ENCODE measurements at regions of chr18 and their contacts with region 1.

Region 1: DNA sequence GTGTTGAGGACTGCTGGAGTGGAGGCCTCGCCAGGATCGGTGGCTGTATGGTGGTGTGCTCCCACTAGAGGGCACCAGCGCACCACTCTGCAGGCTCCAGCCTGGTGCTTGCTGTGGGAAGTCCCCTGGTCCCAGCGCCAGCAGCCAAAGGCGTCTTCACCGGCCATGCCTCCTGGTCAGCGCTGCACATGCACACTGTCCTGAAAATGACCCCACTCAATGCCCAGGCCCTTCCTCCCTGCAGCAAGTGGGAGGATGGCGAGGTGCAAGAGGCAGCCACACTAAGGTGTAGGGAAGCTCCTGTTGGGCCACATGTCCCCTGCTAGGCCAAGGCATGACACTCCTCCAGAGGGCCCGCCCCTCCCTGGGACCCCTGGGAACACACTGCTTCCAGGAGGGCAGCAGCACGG is 136.5 kb downstream of the CTIF start:
- DNase-seq: peak; percentile 72
- H3K4me3 Mint-ChIP-seq: no peak overlapping the region
- H3K27ac Mint-ChIP-seq: no peak overlapping the region
- H3K4me1 Mint-ChIP-seq: peaks cover 2% of the 10 kb centered on the region
- H3K27me3 Mint-ChIP-seq: no peaks in the 10 kb centered on the region

Region 2: DNA sequence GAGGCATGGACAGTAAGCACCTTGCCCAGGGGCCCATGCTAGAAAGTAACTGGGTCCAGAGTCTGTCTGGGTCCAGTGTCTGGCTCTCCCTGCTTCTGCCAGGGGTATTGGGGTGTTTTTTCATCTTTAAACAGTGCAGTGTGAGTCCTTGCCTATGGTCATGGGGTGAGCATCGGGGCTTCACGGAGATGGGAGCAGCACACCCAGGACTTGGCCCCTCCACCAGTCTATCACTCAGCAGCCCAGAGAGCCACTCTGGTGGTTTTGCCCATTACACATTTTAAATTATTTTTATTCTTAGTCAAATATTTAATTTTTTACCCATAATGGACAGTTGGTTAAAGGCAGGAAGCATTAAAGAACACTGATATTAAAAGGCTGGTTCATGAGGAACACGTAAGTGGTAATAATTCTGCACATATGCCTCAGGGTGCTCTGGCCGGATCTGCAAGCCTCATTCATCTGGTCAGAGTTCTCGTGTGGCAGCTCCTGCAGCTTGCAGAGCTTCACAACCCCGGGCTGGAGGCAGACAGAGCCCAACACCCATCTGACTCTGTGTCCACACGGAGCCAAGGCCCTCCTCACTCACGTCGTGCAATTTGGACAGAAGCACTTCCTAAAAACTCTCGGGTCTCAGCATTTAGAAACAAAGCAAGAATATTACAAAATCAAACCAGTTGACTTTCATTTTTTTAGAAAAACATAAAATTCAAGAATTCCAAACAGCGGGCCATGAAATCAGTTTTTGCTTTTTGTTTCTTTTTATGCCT is 67.5 kb after region 1 on chr18:
- intact Hi-C with region 1: no loop called
- DNase-seq: no peak
- H3K4me3 Mint-ChIP-seq: no peak overlapping the region
- H3K27ac Mint-ChIP-seq: no peak overlapping the region
- H3K4me1 Mint-ChIP-seq: no peaks in the 10 kb centered on the region
- H3K27me3 Mint-ChIP-seq: peaks cover 2% of the 10 kb centered on the region

Region 3: GRCh38 chr18:48951448-48952286 is 276.3 kb after region 1 on chr18:
- intact Hi-C with region 1: loop called (anchors 5 kb)
- DNase-seq: peak; percentile 67
- H3K4me3 Mint-ChIP-seq: peak overlapping the region; percentile 93
- H3K27ac Mint-ChIP-seq: peak overlapping the region; percentile 94
- H3K4me1 Mint-ChIP-seq: peaks cover 40% of the 10 kb centered on the region
- H3K27me3 Mint-ChIP-seq: peaks cover 9% of the 10 kb centered on the region

Region 4: DNA sequence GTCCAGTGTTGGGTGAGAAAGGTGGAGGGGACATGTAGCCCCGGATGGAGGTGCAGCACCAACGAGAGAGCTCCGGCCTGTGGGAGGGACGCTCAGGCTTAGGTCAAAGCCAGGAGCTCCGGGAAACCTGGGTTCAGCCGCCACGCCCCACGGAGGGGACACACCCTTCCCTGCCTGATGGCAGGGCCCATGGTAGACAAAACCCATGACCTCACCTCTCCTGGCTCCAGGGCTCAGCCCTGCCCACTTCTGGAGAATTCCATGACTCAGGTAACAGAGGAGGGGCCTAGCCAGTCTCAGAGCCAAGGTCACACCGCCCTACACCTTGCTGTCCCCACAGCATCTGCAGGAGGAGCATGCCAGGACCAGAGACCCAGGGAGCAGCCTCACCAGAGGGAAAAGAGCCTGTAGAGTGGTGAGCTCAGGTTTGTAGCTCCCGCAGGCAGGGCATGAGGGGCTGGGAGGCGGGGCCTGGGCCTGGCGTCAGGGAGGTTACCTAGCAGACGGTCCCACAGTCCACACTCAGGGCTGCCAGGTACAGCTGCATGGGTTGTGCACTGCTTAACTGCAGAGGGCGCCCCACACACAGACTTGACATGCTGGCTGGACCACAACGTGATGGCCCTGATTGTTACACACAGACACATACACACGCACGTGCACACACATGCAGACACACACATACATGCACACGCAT is 346.2 kb after region 1 on chr18:
- intact Hi-C with region 1: loop called (anchors 10 kb)
- DNase-seq: peak; percentile 38
- H3K4me3 Mint-ChIP-seq: no peak overlapping the region
- H3K27ac Mint-ChIP-seq: no peak overlapping the region
- H3K4me1 Mint-ChIP-seq: peaks cover 6% of the 10 kb centered on the region
- H3K27me3 Mint-ChIP-seq: no peaks in the 10 kb centered on the region

Region 5: DNA sequence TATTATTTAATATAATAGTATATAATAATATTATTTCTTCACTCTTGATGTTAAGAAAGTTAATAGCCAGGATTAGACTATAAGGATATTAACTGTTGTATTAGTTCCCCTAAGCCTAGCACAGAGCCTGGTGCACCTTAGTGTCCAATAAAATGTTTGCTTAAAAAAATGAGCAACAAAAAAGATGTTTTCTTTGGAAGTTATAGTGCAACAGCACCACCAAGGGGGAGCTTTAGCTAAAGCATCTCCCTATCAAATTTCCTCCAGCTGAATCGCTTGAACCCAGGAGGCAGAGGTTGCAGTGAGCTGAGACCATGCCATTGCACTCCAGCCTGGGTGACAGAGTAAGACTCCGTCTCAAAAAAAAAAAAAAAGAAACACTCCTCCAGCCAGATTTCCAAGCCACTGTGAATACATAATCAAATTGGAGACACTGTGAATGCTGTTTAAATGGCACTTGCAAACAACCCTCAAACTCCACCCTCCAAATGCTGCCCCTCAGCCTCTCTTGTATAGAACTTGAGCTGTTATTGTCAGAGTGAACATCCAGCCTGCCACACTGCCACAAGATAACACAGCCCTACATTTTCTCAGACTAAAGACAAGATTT is 563.2 kb after region 1 on chr18:
- intact Hi-C with region 1: loop called (anchors 1 kb)
- DNase-seq: no peak
- H3K4me3 Mint-ChIP-seq: no peak overlapping the region
- H3K27ac Mint-ChIP-seq: no peak overlapping the region
- H3K4me1 Mint-ChIP-seq: no peaks in the 10 kb centered on the region
- H3K27me3 Mint-ChIP-seq: no peaks in the 10 kb centered on the region

Region 6: DNA sequence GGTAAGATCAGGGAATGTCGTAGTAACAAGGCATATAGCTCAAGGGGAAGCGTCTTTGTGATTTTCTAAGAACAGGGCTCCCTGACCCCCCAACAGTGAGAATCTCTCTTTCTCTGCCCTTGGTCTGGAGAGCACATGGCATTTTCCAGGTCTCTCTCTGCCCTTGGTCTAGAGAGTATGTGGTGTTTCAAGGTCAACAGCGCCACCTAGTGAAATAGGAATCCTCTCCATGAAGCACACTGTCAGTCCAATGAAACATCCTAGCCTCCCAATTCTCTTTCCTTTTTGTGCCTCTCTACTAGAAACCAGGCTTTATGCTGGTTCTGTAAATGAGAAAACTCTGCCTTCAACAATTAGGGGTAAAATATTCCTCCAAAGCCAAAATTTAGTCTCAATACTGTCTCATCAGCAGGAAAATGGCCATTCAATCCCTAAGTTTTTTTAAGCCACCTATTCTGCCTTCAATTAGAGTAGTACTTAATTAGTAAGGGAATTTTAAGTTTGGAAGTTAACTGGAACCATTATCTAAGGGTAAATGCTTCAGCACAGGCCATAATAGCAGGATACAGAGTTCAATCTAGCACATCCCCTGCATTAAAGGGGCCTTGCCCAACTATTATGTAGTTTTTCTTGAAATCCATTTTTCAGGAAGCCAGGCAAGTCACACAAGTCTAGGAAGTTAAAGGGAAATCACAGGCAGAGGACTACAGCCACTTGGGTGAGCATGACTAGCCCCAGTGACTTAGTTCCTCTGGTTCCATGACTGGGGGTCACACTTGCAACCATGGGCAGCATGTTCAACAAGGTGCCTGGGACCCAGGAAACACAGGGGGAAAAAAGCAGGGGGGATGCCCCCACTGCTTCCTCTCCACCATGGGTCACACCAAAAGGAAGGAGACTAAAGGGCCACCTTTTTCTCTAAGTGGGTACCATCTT is 772.7 kb after region 1 on chr18:
- intact Hi-C with region 1: loop called (anchors 2 kb)
- DNase-seq: no peak
- H3K4me3 Mint-ChIP-seq: no peak overlapping the region
- H3K27ac Mint-ChIP-seq: no peak overlapping the region
- H3K4me1 Mint-ChIP-seq: peaks cover 7% of the 10 kb centered on the region
- H3K27me3 Mint-ChIP-seq: no peaks in the 10 kb centered on the region

Measured in activated T-helper 2 cell treated with anti-CD3 and anti-CD28 coated beads, Interferon-gamma antibody, Interleukin-2, Interleukin-4, amounts not matched to agents 10 μg/mL and 5 μg/mL and 100 μg/mL, durations not matched to agents 14 hours and 24 hours and 36 hours (primary cell).